MCF 10A (cell line): ENCODE measurements at regions of chr1 and their contacts with region 1.

Region 1: GRCh38 chr1:244047621-244048471 is 3.2 kb upstream of the ZBTB18 start:
- DNase-seq: peak; percentile 100
- H3K4me3 Mint-ChIP-seq: peak overlapping the region; percentile 94
- H3K27ac Mint-ChIP-seq: peak overlapping the region; percentile 87
- H3K4me1 Mint-ChIP-seq: peaks cover 32% of the 10 kb centered on the region
- H3K27me3 Mint-ChIP-seq: peaks cover 13% of the 10 kb centered on the region
- CTCF ChIP-seq: no peak

Region 2: GRCh38 chr1:243596431-243597062 is 451.3 kb before region 1 on chr1:
- CTCF ChIA-PET with region 1: no interaction called
- POLR2A ChIA-PET with region 1: interaction called, 4 read pairs
- intact Hi-C with region 1: loop called (anchors 10 kb)
- DNase-seq: peak; percentile 93
- H3K4me3 Mint-ChIP-seq: no peak overlapping the region
- H3K27ac Mint-ChIP-seq: peak overlapping the region; percentile 63
- H3K4me1 Mint-ChIP-seq: peaks cover 26% of the 10 kb centered on the region
- H3K27me3 Mint-ChIP-seq: no peaks in the 10 kb centered on the region
- CTCF ChIP-seq: no peak

Region 3: GRCh38 chr1:243827206-243827605 is 220.6 kb before region 1 on chr1:
- CTCF ChIA-PET with region 1: no interaction called
- POLR2A ChIA-PET with region 1: no interaction called
- intact Hi-C with region 1: no loop called
- DNase-seq: no peak
- H3K4me3 Mint-ChIP-seq: peak overlapping the region; percentile 0
- H3K27ac Mint-ChIP-seq: no peak overlapping the region
- H3K4me1 Mint-ChIP-seq: no peaks in the 10 kb centered on the region
- H3K27me3 Mint-ChIP-seq: no peaks in the 10 kb centered on the region
- CTCF ChIP-seq: no peak

Region 4: GRCh38 chr1:243850452-243851256 is 197.2 kb before region 1 on chr1:
- CTCF ChIA-PET with region 1: interaction called, 3 read pairs
- POLR2A ChIA-PET with region 1: interaction called, 34 read pairs
- intact Hi-C with region 1: loop called (anchors 1 kb)
- DNase-seq: peak; percentile 85
- H3K4me3 Mint-ChIP-seq: peak overlapping the region; percentile 88
- H3K27ac Mint-ChIP-seq: peak overlapping the region; percentile 46
- H3K4me1 Mint-ChIP-seq: peaks cover 20% of the 10 kb centered on the region
- H3K27me3 Mint-ChIP-seq: peaks cover 64% of the 10 kb centered on the region
- CTCF ChIP-seq: no peak

Region 5: GRCh38 chr1:244029124-244029523 is 18.7 kb before region 1 on chr1:
- CTCF ChIA-PET with region 1: interaction called, 10 read pairs
- POLR2A ChIA-PET with region 1: interaction called, 44 read pairs
- intact Hi-C with region 1: no loop called
- DNase-seq: peak; percentile 19
- H3K4me3 Mint-ChIP-seq: no peak overlapping the region
- H3K27ac Mint-ChIP-seq: no peak overlapping the region
- H3K4me1 Mint-ChIP-seq: no peaks in the 10 kb centered on the region
- H3K27me3 Mint-ChIP-seq: peaks cover 30% of the 10 kb centered on the region
- CTCF ChIP-seq: no peak

Region 6: GRCh38 chr1:244112636-244113035 is 64.8 kb after region 1 on chr1:
- CTCF ChIA-PET with region 1: no interaction called
- POLR2A ChIA-PET with region 1: no interaction called
- intact Hi-C with region 1: no loop called
- DNase-seq: no peak
- H3K4me3 Mint-ChIP-seq: no peak overlapping the region
- H3K27ac Mint-ChIP-seq: no peak overlapping the region
- H3K4me1 Mint-ChIP-seq: no peaks in the 10 kb centered on the region
- H3K27me3 Mint-ChIP-seq: peaks cover 11% of the 10 kb centered on the region
- CTCF ChIP-seq: no peak

Region 7: GRCh38 chr1:244163861-244164562 is 116.2 kb after region 1 on chr1:
- CTCF ChIA-PET with region 1: no interaction called
- POLR2A ChIA-PET with region 1: no interaction called
- intact Hi-C with region 1: loop called (anchors 1 kb)
- DNase-seq: peak; percentile 98
- H3K4me3 Mint-ChIP-seq: peak overlapping the region; percentile 60
- H3K27ac Mint-ChIP-seq: no peak overlapping the region
- H3K4me1 Mint-ChIP-seq: no peaks in the 10 kb centered on the region
- H3K27me3 Mint-ChIP-seq: no peaks in the 10 kb centered on the region
- CTCF ChIP-seq: no peak